AG04450 (cell line): ENCODE measurements at regions of chr16 and their contacts with region 1.

Region 1: DNA sequence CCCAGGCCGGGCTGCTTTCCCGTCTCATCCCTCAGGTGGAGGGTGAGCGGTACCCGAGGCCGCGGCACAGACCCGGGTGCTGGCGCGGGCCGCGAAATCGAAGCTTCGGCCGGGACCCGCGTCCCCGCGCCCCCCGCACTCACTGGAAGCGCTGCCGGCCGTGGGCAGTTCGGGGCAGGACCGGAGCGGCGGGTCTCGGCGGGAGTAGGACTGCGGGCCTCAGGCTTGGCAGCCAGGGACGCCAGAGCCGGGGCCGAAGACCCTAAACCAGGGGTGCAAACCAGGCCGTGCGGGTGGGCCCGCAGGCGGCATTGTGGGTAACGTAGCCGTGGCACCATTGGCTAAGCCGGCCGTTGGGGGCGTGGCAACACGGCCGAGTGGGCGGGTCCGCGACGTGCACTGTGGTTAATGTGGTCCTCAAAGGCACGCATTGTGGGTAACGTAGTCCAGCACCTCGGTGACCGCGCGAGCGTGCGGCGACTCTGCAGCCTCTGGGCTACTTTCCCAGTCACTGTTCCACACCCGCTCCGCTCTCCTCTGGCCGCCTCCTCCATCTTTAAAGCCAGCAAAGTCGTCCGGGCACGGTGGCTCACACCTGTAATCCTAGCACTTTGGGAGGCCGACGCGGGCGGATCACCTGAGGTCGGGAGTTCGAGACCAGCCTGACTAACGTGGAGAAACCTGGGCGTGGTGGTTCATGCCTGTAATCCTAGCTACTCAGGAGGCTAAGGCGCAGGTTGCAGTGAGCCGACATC is at the start of gene ZNF500:
- DNase-seq: peak; percentile 89
- H3K4me3 ChIP-seq: peak within 1 kb of the TSS; percentile 82
- H3K27ac ChIP-seq: peak within 1 kb of the TSS; percentile 70
- H3K27me3 ChIP-seq: no peaks in the 10 kb centered on the region
- CTCF ChIP-seq: no peak
- polyA plus RNA-seq, gene ZNF500: 3.1 and 4.2 TPM in 2 replicates

Region 2: GRCh38 chr16:4315186-4316109 is 451.6 kb before region 1 on chr16 and contains the start of gene GLIS2:
- CTCF ChIA-PET with region 1: no interaction called
- POLR2A ChIA-PET with region 1: no interaction called
- DNase-seq: no peak
- H3K4me3 ChIP-seq: peak within 1 kb of the TSS; percentile 76
- H3K27ac ChIP-seq: peak within 1 kb of the TSS; percentile 89
- H3K27me3 ChIP-seq: no peaks in the 10 kb centered on the region
- CTCF ChIP-seq: no peak
- polyA plus RNA-seq, gene GLIS2: 2.2 and 2.9 TPM in 2 replicates

Region 3: DNA sequence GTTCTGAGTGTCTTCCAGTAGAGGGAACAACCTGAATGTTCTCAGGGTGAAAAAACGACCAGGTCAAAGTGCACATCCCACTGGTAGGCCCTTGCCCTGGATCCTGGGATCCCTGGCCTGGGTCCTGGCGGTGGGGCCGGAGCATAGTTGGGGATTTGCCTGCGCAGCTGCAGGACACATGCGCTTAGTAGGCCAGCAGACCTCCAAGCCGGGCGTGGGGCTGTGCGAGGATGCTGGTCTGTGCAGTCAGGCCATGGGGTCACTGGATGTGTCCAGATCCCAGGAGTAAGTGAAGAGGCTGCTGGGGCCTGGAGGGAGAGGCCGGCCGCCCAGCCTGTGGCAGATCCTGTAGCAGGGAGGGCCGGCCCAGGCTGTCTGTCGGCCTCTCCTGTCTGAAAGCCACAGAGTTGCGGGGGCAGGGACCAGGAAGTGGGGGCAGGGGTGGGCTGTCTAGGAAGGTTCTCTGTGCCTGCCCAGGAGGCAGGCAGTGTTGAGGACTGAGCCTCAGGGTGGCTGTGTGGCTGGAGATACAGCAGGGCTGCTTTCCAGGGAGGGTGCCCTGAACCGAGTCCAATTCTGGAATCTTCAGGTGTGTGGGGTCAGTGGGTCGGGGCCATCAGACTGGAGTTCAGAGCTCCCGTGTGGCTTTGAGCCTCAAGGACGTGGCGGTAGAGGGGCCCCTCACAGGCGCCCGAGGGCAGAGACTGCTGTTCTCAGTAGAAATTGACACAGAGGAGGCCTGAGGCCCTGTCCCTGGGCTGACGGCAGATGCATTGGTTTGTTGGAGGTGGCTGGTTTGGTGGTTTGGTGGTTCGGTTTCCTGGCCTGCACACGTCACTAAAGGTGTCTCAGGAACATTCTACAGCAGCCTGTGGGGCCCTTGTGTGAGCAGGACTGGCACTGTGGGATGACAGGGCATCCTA is 90.9 kb before region 1 on chr16:
- CTCF ChIA-PET with region 1: no interaction called
- POLR2A ChIA-PET with region 1: no interaction called
- DNase-seq: no peak
- H3K4me3 ChIP-seq: no peak overlapping the region
- H3K27ac ChIP-seq: no peak overlapping the region
- H3K27me3 ChIP-seq: no peaks in the 10 kb centered on the region
- CTCF ChIP-seq: no peak

Region 4: GRCh38 chr16:4734063-4734729 is 32.9 kb before region 1 on chr16 and contains the starts of genes ANKS3 and DNAAF8:
- CTCF ChIA-PET with region 1: no interaction called
- POLR2A ChIA-PET with region 1: interaction called, 11 read pairs
- DNase-seq: peak; percentile 94
- H3K4me3 ChIP-seq: peak within 1 kb of the TSS; percentile 96
- H3K27ac ChIP-seq: peak within 1 kb of the TSS; percentile 94
- H3K27me3 ChIP-seq: no peaks in the 10 kb centered on the region
- CTCF ChIP-seq: no peak
- polyA plus RNA-seq, gene ANKS3: 14.0 and 15.0 TPM in 2 replicates
- polyA plus RNA-seq, gene DNAAF8: 0.89 and 1.6 TPM in 2 replicates

Region 5: GRCh38 chr16:4814542-4815173 is 47.6 kb after region 1 on chr16:
- CTCF ChIA-PET with region 1: no interaction called
- POLR2A ChIA-PET with region 1: no interaction called
- DNase-seq: no peak
- H3K4me3 ChIP-seq: no peak overlapping the region
- H3K27ac ChIP-seq: no peak overlapping the region
- H3K27me3 ChIP-seq: no peaks in the 10 kb centered on the region
- CTCF ChIP-seq: no peak

Region 6: GRCh38 chr16:4828567-4829321 is 61.7 kb after region 1 on chr16:
- CTCF ChIA-PET with region 1: no interaction called
- POLR2A ChIA-PET with region 1: no interaction called
- DNase-seq: no peak
- H3K4me3 ChIP-seq: no peak overlapping the region
- H3K27ac ChIP-seq: no peak overlapping the region
- H3K27me3 ChIP-seq: no peaks in the 10 kb centered on the region
- CTCF ChIP-seq: no peak